ENCODE measurements at regions of chr4 and their contacts with region 1.

Region 1: DNA sequence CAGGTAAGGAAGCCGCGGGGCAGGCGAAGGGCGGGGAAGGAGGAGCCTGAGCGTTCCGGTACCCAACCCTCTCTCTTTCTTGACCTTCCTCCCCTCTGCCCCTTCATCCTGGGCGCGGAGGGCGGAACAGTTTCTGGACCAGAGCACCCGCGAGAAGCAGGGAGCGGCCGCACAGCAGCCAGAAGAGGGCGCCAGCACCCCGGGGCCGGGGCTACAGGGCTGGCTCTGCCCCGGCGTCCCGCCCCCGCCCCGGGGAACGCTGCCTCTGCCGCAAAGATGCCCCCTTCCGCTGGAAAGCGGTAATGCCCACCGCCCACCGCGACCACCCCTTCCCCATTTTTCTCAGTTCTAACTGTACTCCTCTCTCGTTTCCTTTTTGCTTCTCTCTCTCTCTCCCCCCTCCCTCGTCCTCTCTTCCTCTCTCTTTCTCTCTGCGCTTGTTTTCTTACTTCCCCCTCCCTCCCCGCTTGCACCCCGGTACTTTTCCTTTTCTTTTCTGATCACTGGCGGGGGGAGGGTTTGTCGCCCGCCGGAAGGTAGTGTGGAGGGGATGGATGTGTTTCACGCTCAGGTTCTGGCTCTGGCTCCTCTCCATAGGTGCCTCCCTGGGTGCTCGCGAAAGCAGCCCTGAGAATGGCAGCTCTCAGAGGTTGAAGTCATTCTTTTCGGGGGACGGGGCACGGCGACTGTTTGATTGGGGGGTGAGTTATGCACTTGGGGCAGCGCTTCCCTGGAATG is 13.1 kb upstream of the PRDM8 start:
- DNase-seq: peak; percentile 96
- ATAC-seq: peak; percentile 87
- H3K4me3 Mint-ChIP-seq: peak overlapping the region; percentile 83
- H3K27ac Mint-ChIP-seq: no peak overlapping the region
- H3K4me1 Mint-ChIP-seq: peaks cover 32% of the 10 kb centered on the region
- H3K27me3 Mint-ChIP-seq: peaks cover 98% of the 10 kb centered on the region
- CTCF ChIP-seq: peak; percentile 88

Region 2: GRCh38 chr4:80072744-80073472 is 111.3 kb before region 1 on chr4 and contains the start of gene ANTXR2:
- CTCF ChIA-PET with region 1: interaction called, 13 read pairs
- POLR2A ChIA-PET with region 1: no interaction called
- DNase-seq: peak; percentile 82
- ATAC-seq: peak; percentile 93
- H3K4me3 Mint-ChIP-seq: peak within 1 kb of the TSS; percentile 95
- H3K27ac Mint-ChIP-seq: no peak within 1 kb of the TSS
- H3K4me1 Mint-ChIP-seq: peaks cover 23% of the 10 kb centered on the region
- H3K27me3 Mint-ChIP-seq: peaks cover 36% of the 10 kb centered on the region
- CTCF ChIP-seq: no peak
- total RNA-seq, gene ANTXR2: 7.9 to 9.9 TPM (median 9.0 TPM) in 3 replicates